Right cardiac atrium (tissue), 5 donors: ENCODE measurements at regions of chr5 and their contacts with region 1.

Region 1: DNA sequence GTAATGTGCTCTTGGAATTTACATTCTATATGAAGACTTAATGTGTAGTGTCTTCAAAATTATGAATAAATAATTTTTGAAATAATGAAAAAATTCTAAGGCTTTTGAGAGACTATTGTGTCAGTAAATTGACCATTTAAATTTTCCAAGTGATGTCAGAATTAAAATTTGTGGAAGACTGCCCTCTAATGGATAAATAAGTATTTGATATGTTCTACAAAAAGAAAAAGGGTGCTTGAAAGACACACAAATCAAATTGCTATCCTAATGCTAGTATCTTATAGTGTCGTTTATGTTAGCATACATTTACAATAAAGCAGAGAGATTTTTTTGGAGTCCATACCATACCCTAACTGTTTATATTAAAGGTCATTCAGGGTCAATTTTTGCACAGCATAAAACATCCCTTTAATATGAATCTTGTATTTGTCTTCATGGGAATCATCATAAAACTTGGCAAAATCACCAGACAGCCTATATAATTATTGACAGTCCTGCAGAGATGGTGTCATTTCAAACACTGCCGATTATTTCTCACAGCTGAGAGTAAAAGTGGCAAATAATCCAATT is 120.8 kb upstream of the SLC27A6 start:
- DNase-seq: no peak
- ATAC-seq: no peak
- H3K4me3 ChIP-seq: no peak overlapping the region
- H3K27ac ChIP-seq: no peak overlapping the region
- H3K4me1 ChIP-seq: no peaks in the 10 kb centered on the region
- H3K27me3 ChIP-seq: no peaks in the 10 kb centered on the region

Region 2: DNA sequence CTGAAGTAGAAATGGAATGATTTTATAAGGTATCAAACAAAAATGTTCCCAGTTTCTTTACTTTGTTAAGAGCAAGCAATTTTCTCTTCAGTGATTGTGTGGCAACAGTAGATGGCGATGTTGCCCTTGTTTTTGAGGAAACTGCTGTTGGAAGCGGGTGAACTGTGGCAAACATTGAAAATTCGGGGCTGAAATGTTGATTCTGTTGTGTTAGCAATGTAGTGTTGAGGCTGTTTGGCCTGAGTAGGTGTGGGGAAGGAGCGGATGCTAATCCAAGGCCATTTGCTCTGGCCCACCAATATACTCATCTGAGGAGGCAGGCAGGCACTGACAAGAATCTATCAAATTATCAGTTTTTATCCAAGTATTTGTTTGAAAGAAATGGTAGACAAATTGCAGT is 631.1 kb before region 1 on chr5:
- intact Hi-C with region 1: loop called in 2 of 4 experiments (anchors 5 to 10 kb)
- DNase-seq: peak in 1 of 3 donors; percentile 40
- ATAC-seq: peak in 1 of 2 donors; percentile 29
- H3K4me3 ChIP-seq: no peak overlapping the region
- H3K27ac ChIP-seq: no peak overlapping the region
- H3K4me1 ChIP-seq: no peaks in the 10 kb centered on the region
- H3K27me3 ChIP-seq: no peaks in the 10 kb centered on the region

Region 3: DNA sequence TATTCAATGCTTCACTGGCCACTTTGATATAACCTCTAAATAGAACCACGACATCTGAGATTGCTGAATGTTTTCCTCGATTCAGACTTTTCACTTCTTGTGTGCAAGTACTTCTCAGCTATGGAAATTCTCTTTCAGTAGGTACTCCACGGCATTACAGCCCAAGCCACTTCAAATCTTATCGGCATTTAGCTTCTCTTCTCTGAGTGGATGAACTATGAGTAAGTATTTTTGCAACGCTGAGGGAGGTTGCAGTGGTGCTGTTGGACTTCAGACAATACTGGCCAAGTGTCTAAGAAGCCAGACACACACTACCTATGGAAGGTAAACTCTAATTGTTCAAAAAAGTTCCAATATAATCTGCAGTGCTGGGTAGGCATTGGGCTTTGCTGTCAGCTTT is 366.5 kb before region 1 on chr5:
- intact Hi-C with region 1: no loop called
- DNase-seq: no peak
- ATAC-seq: peak in 1 of 2 donors; percentile 42
- H3K4me3 ChIP-seq: no peak overlapping the region
- H3K27ac ChIP-seq: no peak overlapping the region
- H3K4me1 ChIP-seq: no peaks in the 10 kb centered on the region
- H3K27me3 ChIP-seq: no peaks in the 10 kb centered on the region

Region 4: DNA sequence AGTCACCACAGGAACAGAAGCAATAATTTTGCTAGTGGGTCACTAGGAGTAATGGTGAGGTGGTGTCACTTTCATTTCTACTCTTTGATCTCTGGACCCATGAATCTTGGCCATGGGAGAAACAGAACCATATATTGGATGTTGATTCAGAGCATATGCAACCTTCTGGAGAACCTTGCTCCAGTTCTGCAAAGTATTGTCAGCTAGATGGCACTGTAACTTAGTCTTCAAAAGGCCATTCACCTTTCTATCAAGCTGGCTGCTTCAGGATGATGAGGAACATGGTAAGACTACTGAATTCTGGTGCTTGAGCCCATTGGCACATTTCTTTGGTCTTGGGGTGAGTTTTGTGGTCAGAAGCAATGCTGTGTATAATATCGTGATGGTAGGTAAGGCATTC is 177.3 kb before region 1 on chr5:
- intact Hi-C with region 1: loop called in 2 of 4 experiments (anchors 5 to 10 kb)
- DNase-seq: no peak
- ATAC-seq: no peak
- H3K4me3 ChIP-seq: no peak overlapping the region
- H3K27ac ChIP-seq: no peak overlapping the region
- H3K4me1 ChIP-seq: no peaks in the 10 kb centered on the region
- H3K27me3 ChIP-seq: no peaks in the 10 kb centered on the region

Region 5: DNA sequence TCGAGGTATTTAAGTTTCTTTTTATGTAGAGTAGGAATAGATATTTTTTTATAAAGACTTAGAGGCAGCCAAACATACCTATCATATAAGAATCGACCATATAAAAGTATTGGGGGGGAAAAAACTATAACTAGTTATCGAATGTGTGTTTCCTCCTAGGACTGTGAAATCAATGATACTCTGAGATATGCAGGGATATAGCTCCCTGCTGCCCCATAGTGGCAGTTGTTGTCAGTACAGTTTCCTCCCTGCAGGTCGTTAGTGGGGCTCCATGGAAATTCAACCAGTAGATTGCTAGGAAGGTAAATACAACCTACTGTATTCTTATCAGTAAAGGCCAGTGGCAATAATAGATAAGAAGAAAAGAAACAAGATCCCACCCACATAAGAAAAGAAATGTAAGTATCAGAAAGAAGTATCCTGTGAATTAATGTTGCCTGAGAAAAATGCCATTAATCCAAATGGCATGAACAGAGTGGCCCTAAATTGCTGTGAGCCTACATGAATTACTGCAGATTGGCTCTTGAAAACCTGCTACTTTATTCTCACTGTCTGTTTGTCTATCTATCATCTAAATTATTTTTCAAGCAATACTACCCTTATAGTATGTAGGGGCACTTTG is 169.5 kb before region 1 on chr5:
- intact Hi-C with region 1: loop called in 1 of 4 experiments (anchors 10 kb)
- DNase-seq: peak in 1 of 3 donors; percentile 43
- ATAC-seq: no peak
- H3K4me3 ChIP-seq: no peak overlapping the region
- H3K27ac ChIP-seq: no peak overlapping the region
- H3K4me1 ChIP-seq: no peaks in the 10 kb centered on the region
- H3K27me3 ChIP-seq: no peaks in the 10 kb centered on the region

Region 6: DNA sequence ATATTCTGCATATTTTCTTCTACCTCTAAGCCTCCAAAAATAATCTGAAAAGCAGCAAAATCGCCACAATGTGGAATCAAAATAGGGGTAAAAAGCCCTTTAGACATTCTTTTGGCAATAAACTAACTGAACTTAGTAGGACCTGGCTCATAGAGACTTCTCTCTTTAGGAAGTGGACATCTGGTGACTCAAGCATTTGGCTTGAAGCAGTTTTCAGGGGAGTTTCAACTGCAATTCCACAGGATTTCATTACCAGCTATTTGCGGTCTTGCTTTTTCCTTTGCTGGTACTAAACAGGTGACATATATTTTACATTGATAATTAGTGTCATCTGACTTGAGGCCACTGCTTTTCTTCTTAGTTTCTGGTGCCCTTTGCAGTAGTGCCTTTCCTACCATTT is 133.2 kb before region 1 on chr5:
- intact Hi-C with region 1: no loop called
- DNase-seq: no peak
- ATAC-seq: no peak
- H3K4me3 ChIP-seq: no peak overlapping the region
- H3K27ac ChIP-seq: no peak overlapping the region
- H3K4me1 ChIP-seq: no peaks in the 10 kb centered on the region
- H3K27me3 ChIP-seq: no peaks in the 10 kb centered on the region